Posterior vena cava (tissue), 2 donors: ENCODE measurements at regions of chr19 and their contacts with region 1.

Region 1: GRCh38 chr19:14565293-14565670 is 6.6 kb downstream of the NDUFB7 start:
- DNase-seq: no peak

Region 2: DNA sequence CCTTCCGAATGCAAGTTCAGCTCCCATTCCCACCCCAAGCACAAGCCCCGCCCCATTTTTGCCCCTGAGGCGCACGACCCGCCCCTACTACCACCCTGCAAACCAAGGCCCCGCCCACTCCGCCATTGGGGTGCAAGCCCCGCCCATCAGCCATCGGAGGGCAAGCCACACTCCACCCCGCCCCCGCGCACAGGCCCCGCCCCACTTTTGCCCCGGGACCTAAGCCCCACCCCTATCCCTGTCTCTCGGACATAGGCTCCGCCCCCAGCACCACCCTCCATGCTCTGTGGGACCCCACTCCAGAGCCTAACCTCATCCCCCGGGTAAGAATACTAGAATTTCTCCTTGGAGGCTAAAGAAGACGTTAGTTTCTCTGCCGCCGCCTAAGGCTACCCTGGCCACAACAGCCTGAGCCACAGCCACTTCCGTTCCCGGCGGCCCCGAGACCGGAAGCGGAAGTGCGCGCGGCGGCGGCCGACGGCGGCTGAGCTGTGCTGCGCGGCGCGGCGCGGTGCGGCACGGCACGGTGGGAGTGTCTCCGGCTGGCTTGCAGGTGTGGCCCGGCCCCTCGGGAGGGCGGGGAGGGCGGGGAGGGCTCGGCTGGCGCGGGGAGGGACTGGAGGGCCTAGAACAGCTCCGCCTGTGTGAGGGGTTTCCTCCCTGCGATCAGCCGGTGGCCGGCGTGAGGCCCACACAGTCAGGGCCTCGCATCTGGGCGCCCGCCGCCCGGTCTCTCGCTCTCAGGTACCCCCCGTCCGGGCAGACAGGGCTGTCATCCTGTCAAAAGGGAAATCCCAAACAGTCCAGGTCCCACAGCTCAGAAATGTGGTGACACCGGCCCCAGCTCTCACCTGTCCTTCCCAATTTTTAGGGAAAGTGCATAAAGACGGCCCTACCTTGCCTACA is 124.6 kb after region 1 on chr19 and contains the start of gene ZNF333:
- intact Hi-C with region 1: loop called in 1 of 2 experiments (anchors 5 kb)
- DNase-seq: peak; percentile 98
- total RNA-seq, gene ZNF333: 17.5 to 20.3 TPM